Sciatic nerve (tissue), 2 donors: ENCODE measurements at regions of chr14 and their contacts with region 1.

Region 1: DNA sequence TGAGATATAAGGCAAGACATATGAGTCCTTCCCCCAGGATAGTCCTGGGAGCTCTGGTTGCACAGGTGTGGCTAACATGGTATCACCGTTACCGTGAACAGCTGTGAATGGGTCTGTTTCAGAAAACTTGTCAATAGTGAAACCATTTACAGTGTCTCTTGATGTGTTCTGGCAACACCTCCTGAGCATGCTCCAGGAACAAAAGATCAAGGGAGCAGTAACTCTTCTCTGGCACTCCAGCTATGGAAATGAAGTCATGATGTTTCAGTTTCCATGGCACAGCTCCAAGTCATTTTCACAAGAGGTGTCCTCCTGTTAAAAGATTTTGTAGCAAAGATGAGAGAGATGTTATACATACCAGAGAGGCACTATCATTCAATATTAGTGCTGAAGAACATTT is 253.7 kb downstream of the SNAPC1 start:
- DNase-seq: no peak
- ATAC-seq: no peak

Region 2: DNA sequence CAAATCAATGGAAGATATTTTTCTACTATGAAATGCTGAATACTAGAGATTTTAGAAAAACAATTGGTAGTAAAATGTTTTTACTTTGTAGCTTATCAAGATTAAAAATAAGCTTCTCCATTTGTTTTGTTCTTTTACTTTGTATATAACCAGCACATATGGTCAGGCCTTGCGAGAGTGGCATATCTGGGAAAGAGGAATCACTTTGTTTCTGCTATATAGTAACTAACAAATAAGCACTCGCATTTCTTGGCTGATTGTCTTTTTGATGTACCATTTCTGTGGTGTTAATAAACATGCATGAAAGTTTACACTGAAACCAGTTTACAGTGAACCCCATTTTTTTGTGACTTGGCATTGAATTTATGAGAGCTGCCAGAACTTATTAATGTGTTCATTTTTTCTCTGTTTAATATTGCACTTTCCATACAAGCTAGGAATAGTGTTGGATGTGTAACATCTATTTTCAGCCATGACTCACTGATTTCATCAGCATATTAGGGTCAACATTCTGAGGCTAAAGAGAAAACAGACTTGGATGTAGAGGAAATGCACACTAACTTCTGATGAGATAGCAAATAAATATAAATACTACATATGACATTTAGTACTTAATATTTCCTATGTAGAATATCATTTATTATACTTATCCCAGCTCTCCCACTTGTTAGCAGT is 393.8 kb after region 1 on chr14:
- intact Hi-C with region 1: no loop called
- DNase-seq: no peak
- ATAC-seq: no peak

Region 3: GRCh38 chr14:63432228-63432627 is 1416.3 kb after region 1 on chr14:
- intact Hi-C with region 1: loop called (anchors 5 kb)
- DNase-seq: no peak
- ATAC-seq: no peak